Panc1 (cell line): ENCODE measurements at regions of chr17 and their contacts with region 1.

Region 1: GRCh38 chr17:59829217-59830006 is 63.3 kb downstream of the TUBD1 start:
- DNase-seq: peak; percentile 97
- ATAC-seq: peak; percentile 91
- H3K4me3 ChIP-seq: peak overlapping the region in 1 of 2 experiments; percentile 6; a peak in 1 of 4 replicates
- H3K27ac ChIP-seq: peak overlapping the region; percentile 100
- H3K4me1 ChIP-seq: peaks cover 85% of the 10 kb centered on the region
- H3K27me3 ChIP-seq: no peaks in the 10 kb centered on the region
- CTCF ChIP-seq: no peak

Region 2: GRCh38 chr17:59687506-59687905 is 141.9 kb before region 1 on chr17:
- CTCF ChIA-PET with region 1: no interaction called
- POLR2A ChIA-PET with region 1: no interaction called
- in situ Hi-C with region 1: no loop called
- intact Hi-C with region 1: loop called (anchors 2 kb)
- DNase-seq: no peak
- ATAC-seq: no peak
- H3K4me3 ChIP-seq: no peak overlapping the region
- H3K27ac ChIP-seq: peak overlapping the region; percentile 76
- H3K4me1 ChIP-seq: peaks cover 19% of the 10 kb centered on the region
- H3K27me3 ChIP-seq: no peaks in the 10 kb centered on the region
- CTCF ChIP-seq: no peak

Region 3: GRCh38 chr17:59707114-59707970 is 122.1 kb before region 1 on chr17 and contains the starts of genes PTRH2 and VMP1:
- CTCF ChIA-PET with region 1: no interaction called
- POLR2A ChIA-PET with region 1: interaction called, 10 read pairs
- in situ Hi-C with region 1: no loop called
- intact Hi-C with region 1: no loop called
- DNase-seq: peak; percentile 93
- ATAC-seq: peak; percentile 96
- H3K4me3 ChIP-seq: peak within 1 kb of the TSS; percentile 99
- H3K27ac ChIP-seq: peak within 1 kb of the TSS; percentile 100
- H3K4me1 ChIP-seq: peaks cover 24% of the 10 kb centered on the region
- H3K27me3 ChIP-seq: no peaks in the 10 kb centered on the region
- CTCF ChIP-seq: no peak
- total RNA-seq, gene PTRH2: 40.2 TPM
- total RNA-seq, gene VMP1: 281 TPM

Region 4: GRCh38 chr17:59800530-59800942 is 28.9 kb before region 1 on chr17:
- CTCF ChIA-PET with region 1: no interaction called
- POLR2A ChIA-PET with region 1: interaction called, 10 read pairs
- in situ Hi-C with region 1: no loop called
- intact Hi-C with region 1: no loop called
- DNase-seq: no peak
- ATAC-seq: peak; percentile 74
- H3K4me3 ChIP-seq: no peak overlapping the region
- H3K27ac ChIP-seq: peak overlapping the region; percentile 99
- H3K4me1 ChIP-seq: peaks cover 43% of the 10 kb centered on the region
- H3K27me3 ChIP-seq: no peaks in the 10 kb centered on the region
- CTCF ChIP-seq: no peak

Region 5: DNA sequence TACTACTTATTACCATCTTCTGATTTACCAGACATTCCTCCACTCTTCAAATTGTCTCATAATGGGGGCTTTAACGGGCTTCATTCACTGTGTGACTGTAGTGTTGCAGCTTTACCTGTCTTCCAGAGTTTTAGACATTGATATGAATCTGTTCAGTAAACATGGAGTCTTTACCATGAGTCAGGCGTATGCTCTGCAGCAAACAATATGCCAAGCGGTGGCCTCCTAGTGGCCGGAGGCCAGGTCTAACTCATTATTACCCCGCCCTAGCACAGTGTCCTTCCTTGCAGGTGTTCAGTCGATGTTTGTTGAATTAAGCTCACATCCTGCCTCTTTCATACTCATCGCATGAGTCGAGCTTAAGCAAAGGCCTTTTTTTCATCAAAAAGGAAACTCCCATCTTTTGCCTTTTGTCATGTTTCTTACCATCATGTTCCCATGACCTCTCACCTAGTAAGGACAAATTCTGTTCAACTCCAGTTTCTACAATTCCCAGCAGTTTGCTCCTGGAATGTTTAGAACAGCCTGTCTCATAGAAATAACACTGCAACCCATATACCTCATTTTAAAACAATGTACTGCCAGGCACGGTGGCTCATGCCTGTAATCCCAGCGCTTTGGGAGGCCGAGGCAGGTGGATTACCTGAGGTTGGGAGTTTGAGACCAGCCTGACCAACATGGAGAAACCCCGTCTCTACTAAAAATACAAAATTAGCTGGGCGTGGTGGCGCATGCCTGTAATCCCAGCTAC is 23.9 kb after region 1 on chr17:
- CTCF ChIA-PET with region 1: interaction called, 4 read pairs
- POLR2A ChIA-PET with region 1: interaction called, 18 read pairs
- in situ Hi-C with region 1: no loop called
- intact Hi-C with region 1: no loop called
- DNase-seq: peak; percentile 97
- ATAC-seq: peak; percentile 91
- H3K4me3 ChIP-seq: no peak overlapping the region
- H3K27ac ChIP-seq: peak overlapping the region; percentile 100
- H3K4me1 ChIP-seq: peaks cover 66% of the 10 kb centered on the region
- H3K27me3 ChIP-seq: no peaks in the 10 kb centered on the region
- CTCF ChIP-seq: peak; percentile 82